Activated CD4-positive, alpha-beta memory T cell treated with anti-CD3 and anti-CD28 coated beads for 36 hours (primary cell): ENCODE measurements at regions of chr19 and their contacts with region 1.

Region 1: DNA sequence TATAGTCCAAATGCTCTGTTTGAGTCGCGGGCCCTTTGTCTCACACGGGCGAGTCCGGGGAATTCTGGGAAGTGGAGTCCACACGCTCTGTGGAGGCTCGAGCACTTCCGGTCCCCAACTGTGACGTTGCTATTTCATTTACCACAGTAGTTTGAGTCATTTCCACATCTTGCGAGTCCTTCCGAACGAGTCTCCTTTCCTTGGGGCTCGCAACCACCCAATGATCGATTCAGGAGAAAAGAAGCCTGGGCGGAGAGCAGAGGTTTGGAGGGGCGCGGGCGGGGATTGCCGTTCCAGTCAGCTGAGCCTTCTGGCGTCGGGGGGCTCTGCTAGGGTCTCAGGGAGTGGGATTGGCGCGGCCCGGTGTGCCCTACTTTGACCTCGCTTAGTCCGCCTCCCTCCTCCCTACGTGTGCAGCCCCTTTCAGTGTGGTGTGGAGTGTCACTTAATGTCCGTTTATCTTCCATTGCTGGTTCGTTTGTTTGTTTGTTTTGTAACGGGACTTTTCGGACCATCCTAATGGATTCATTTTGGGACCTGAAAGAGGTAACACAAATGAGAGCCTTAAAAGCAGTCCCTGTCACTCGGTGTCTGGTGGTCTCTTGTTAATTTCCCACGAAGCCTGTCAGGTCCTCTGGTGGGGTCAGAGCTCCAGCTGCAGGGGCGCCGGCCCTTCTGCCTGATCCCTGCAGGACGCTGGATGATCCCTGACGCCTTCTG is at the start of gene ZNF222:
- DNase-seq: peak; percentile 90
- H3K4me3 Mint-ChIP-seq: peak within 1 kb of the TSS; percentile 90
- H3K27ac Mint-ChIP-seq: peak within 1 kb of the TSS; percentile 60
- H3K4me1 Mint-ChIP-seq: peaks cover 18% of the 10 kb centered on the region
- H3K27me3 Mint-ChIP-seq: peaks cover 2% of the 10 kb centered on the region
- total RNA-seq, gene ZNF222: 0.88 to 0.94 TPM

Region 2: DNA sequence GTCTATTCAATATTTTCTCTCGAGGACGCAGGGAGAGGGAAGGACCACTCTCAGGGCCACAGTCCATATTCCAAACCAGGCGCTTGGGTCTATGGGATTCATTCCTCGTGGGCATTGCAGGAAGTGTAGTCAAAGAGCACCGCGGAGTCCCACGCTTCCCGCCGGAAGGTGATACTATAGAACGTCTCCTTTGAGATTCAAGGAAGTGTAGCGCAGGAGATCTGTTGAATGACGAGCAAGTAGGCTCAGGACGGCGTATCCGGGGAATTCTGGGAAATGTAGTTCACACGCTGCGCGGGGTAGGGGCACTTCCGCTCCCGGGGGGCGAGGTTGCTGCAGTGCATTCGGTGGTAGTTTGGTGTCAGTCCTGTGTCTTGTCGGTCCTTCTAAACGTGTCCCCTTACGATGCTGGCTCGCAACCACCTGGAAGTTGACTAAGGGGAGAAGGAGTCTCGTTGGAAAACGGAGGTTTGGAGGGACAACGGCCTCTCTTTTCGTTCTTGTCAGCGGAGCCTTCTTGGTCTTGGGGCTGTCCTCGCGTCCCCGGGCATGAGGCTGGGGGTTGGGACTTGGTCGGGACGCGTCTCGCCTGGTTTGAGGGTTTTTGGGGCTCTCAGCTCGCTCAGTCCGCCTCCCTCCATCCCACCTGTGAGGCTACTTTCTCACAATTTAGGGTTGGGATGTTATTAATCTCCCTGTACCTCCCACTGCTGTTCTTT is 46.6 kb after region 1 on chr19 and contains the start of gene ZNF284:
- CTCF ChIA-PET with region 1: no interaction called
- POLR2A ChIA-PET with region 1: no interaction called
- intact Hi-C with region 1: loop called (anchors 1 kb)
- DNase-seq: peak; percentile 87
- H3K4me3 Mint-ChIP-seq: peak within 1 kb of the TSS; percentile 87
- H3K27ac Mint-ChIP-seq: peak within 1 kb of the TSS; percentile 43
- H3K4me1 Mint-ChIP-seq: peaks cover 20% of the 10 kb centered on the region
- H3K27me3 Mint-ChIP-seq: no peaks in the 10 kb centered on the region
- total RNA-seq, gene ZNF284: 1.1 to 1.4 TPM

Region 3: DNA sequence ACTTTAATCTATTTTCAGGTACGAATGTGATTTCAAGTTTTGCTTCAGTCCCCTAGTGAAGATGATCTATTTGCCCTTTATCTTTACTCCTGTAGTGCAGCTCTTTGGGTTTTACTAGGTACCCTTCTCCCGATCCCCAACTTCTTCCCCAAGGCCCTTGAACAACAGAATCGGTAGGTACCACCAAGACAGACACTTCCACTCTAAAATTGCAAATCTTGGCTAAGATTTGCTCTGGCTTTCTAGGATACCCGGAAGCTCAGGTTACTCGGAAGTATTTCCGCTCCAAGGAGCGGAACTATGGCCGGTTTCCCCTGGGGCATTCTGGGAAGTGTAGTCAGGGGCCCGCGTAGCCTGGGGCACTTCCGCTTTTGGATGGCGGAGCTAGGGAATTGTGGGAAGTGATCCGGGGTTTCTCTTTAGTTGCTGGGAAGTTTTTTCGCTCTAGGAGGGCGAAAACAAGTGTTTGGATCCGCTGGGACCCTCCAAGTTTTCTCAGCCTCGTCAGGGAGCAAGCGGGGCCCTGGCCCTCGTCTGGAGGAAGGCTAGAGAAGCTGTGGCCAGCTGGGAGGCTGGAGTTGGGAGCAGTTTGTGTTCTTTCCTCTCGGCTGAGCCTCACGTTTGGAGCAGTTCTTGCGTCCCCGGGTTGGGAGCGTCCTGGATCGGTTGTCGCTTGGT is 181.9 kb after region 1 on chr19:
- CTCF ChIA-PET with region 1: no interaction called
- POLR2A ChIA-PET with region 1: no interaction called
- intact Hi-C with region 1: loop called (anchors 2 kb)
- DNase-seq: peak; percentile 84
- H3K4me3 Mint-ChIP-seq: peak overlapping the region; percentile 82
- H3K27ac Mint-ChIP-seq: peak overlapping the region; percentile 79
- H3K4me1 Mint-ChIP-seq: peaks cover 7% of the 10 kb centered on the region
- H3K27me3 Mint-ChIP-seq: peaks cover 6% of the 10 kb centered on the region